ENCODE measurements at regions of chr11 and their contacts with region 1.

Region 1: DNA sequence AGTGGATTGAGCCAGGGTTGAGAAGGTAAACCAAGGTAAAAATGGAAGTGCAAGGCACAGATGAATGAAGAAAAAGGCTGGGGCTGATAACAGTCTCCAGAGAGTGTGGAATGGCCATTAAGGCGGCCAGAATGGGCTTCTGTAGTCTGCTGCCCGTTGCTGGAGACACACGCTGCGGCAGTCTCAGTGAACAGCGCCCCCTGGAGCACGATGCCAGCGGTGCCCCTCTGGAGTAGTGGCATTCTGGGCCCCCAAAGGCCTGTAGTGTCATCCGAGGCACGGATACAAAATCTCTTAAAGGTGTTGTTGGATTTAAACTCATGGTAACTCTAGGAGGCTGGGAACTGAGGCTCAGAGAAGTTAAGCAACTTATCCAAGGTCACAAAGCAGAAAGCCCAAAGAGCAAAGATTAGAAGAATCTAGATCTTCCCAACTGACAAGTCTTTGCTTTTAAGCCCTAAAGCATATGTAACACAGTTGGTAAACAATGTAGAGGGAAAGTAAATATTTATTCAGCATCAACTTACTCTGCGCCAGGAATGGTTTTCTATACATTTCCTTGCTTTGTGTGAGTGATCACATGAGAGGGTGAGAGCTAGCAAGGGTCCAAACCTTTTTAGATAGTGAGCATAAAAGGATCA is 18.2 kb downstream of the KCNJ1 start:
- DNase-seq: peak; percentile 72
- H3K4me3 ChIP-seq: no peak overlapping the region
- H3K27ac ChIP-seq: no peak overlapping the region
- H3K4me1 ChIP-seq: peaks cover 4% of the 10 kb centered on the region
- H3K27me3 ChIP-seq: no peaks in the 10 kb centered on the region
- CTCF ChIP-seq: peak; percentile 94 to 97
- POLR2A ChIP-seq: no peak

Region 2: DNA sequence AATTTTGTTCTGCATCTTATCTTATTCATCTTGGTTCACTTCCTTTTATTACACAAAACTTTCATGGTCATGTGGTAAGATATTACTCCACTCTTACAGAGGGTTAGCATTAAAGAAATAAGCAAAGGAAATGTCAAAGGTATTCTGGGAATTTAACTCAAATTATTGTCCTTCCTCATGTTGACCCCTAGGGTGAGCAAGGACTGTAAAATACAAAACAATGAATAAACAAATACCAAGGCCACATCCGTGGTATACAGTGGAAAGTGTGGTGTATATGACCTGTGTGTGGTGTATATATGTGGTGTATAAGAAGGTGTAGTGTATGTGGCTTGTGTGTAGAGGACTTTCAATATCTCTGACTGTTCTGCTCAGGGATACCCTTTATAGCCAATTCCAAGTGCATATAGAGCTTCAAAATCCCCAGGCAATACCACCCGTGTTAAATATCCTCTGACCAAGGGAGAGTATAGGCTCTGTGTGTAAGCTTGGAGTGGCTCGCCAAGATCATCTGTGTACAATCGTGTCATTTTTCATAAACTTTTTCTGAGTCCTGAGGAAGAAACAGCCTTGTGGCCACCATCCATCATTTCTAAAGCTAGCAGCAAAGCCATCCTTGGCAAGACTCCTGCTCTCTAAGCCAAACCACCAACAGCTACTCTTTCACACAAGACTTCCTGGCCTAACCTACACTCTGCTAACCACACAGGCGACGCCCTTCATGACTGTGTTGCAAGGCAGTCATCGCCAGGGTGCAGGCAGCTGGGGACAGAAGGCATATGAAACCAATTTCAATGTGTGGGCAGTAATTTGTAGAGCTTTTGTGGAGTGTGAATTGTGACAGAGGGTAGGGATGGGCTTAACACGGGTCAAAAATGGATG is 809.6 kb before region 1 on chr11:
- CTCF ChIA-PET with region 1: no interaction called
- POLR2A ChIA-PET with region 1: no interaction called
- dilution Hi-C with region 1: no loop called
- intact Hi-C with region 1: loop called (anchors 5 kb)
- DNase-seq: peak; percentile 74
- H3K4me3 ChIP-seq: no peak overlapping the region
- H3K27ac ChIP-seq: no peak overlapping the region
- H3K4me1 ChIP-seq: peaks cover 14% of the 10 kb centered on the region
- H3K27me3 ChIP-seq: no peaks in the 10 kb centered on the region
- CTCF ChIP-seq: no peak
- POLR2A ChIP-seq: no peak

Measured in endothelial cell of umbilical vein (primary cell).